Tibial artery (tissue), 4 donors: ENCODE measurements at regions of chr13 and their contacts with region 1.

Region 1: DNA sequence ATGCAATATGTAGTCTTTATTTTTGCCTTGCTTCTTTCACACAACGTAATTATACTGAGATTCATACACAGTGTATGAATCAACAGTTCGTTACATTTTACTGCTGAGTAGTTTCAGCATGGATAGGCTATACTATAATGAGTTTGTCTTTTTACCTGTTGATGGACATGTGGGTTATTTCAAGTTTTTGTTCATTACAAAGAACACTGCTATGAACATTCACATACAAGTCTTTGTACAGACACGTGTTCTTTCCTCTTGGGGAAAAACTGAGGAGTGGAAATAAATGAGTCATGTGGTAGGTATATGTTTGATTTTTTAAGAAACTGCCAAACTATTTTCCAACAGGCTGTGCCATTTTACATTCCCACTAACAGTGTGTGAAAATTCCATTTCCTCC is 35.1 kb downstream of the ENOX1 start:
- DNase-seq: no peak
- H3K4me3 ChIP-seq: no peak overlapping the region
- H3K27ac ChIP-seq: no peak overlapping the region
- H3K4me1 ChIP-seq: peaks cover 0 to 11% (median 0%) of the 10 kb centered on the region in 4 donors
- H3K27me3 ChIP-seq: no peaks in the 10 kb centered on the region
- CTCF ChIP-seq: no peak

Region 2: GRCh38 chr13:43648733-43649132 is 102.9 kb before region 1 on chr13:
- intact Hi-C with region 1: no loop called
- DNase-seq: no peak
- H3K4me3 ChIP-seq: no peak overlapping the region
- H3K27ac ChIP-seq: no peak overlapping the region
- H3K4me1 ChIP-seq: no peaks in the 10 kb centered on the region
- H3K27me3 ChIP-seq: no peaks in the 10 kb centered on the region
- CTCF ChIP-seq: no peak

Region 3: GRCh38 chr13:43773602-43774001 is 22.0 kb after region 1 on chr13:
- intact Hi-C with region 1: loop called (anchors 2 kb)
- DNase-seq: no peak
- H3K4me3 ChIP-seq: no peak overlapping the region
- H3K27ac ChIP-seq: no peak overlapping the region
- H3K4me1 ChIP-seq: no peaks in the 10 kb centered on the region
- H3K27me3 ChIP-seq: no peaks in the 10 kb centered on the region
- CTCF ChIP-seq: no peak